Prostate gland (tissue), 2 donors: ENCODE measurements at regions of chr3 and their contacts with region 1.

Region 1: GRCh38 chr3:170357176-170357919 is at the start of gene SKIL:
- DNase-seq: peak; percentile 97
- H3K4me3 ChIP-seq: peak within 1 kb of the TSS; percentile 87 to 99
- H3K27ac ChIP-seq: peak within 1 kb of the TSS; percentile 95 to 98
- H3K4me1 ChIP-seq: peaks cover 5% of the 10 kb centered on the region
- H3K27me3 ChIP-seq: no peaks in the 10 kb centered on the region
- CTCF ChIP-seq: peak in 2 of 4 experiments; percentile 34 to 36
- POLR2A ChIP-seq: peak; percentile 94
- total RNA-seq, gene SKIL: 41.8 to 49.6 TPM

Region 2: GRCh38 chr3:169764452-169765274 is 592.7 kb before region 1 on chr3 and contains the start of gene TERC:
- intact Hi-C with region 1: loop called (anchors 10 kb)
- DNase-seq: peak; percentile 90
- H3K4me3 ChIP-seq: peak within 1 kb of the TSS; percentile 84 to 92
- H3K27ac ChIP-seq: peak within 1 kb of the TSS; percentile 96 to 97
- H3K4me1 ChIP-seq: no peaks in the 10 kb centered on the region
- H3K27me3 ChIP-seq: no peaks in the 10 kb centered on the region
- CTCF ChIP-seq: peak in 1 of 4 experiments; percentile 20
- POLR2A ChIP-seq: peak; percentile 87
- total RNA-seq, gene TERC: 128 to 1,013 TPM

Region 3: GRCh38 chr3:170180908-170181879 is 176.2 kb before region 1 on chr3 and contains the start of gene PHC3:
- intact Hi-C with region 1: loop called (anchors 5 kb)
- DNase-seq: peak; percentile 90
- H3K4me3 ChIP-seq: peak within 1 kb of the TSS; percentile 68 to 83
- H3K27ac ChIP-seq: peak within 1 kb of the TSS; percentile 94 to 97
- H3K4me1 ChIP-seq: no peaks in the 10 kb centered on the region
- H3K27me3 ChIP-seq: no peaks in the 10 kb centered on the region
- CTCF ChIP-seq: peak in 3 of 4 experiments; percentile 46 to 72 (median 55)
- POLR2A ChIP-seq: peak; percentile 73
- total RNA-seq, gene PHC3: 34.5 to 100 TPM

Region 4: GRCh38 chr3:170196833-170197232 is 160.5 kb before region 1 on chr3:
- intact Hi-C with region 1: no loop called
- DNase-seq: no peak
- H3K4me3 ChIP-seq: no peak overlapping the region
- H3K27ac ChIP-seq: no peak overlapping the region
- H3K4me1 ChIP-seq: no peaks in the 10 kb centered on the region
- H3K27me3 ChIP-seq: no peaks in the 10 kb centered on the region
- CTCF ChIP-seq: no peak
- POLR2A ChIP-seq: no peak

Region 5: GRCh38 chr3:170429050-170429449 is 71.7 kb after region 1 on chr3:
- intact Hi-C with region 1: no loop called
- DNase-seq: no peak
- H3K4me3 ChIP-seq: no peak overlapping the region
- H3K27ac ChIP-seq: no peak overlapping the region
- H3K4me1 ChIP-seq: no peaks in the 10 kb centered on the region
- H3K27me3 ChIP-seq: no peaks in the 10 kb centered on the region
- CTCF ChIP-seq: no peak
- POLR2A ChIP-seq: no peak